ENCODE measurements at regions of chr11 and their contacts with region 1.

Region 1: GRCh38 chr11:10405855-10406592 is 49.0 kb upstream of the AMPD3 start:
- DNase-seq: peak; percentile 74
- H3K4me3 Mint-ChIP-seq: no peak overlapping the region
- H3K27ac Mint-ChIP-seq: no peak overlapping the region
- H3K4me1 Mint-ChIP-seq: peaks cover 12% of the 10 kb centered on the region
- H3K27me3 Mint-ChIP-seq: peaks cover 4% of the 10 kb centered on the region
- CTCF ChIP-seq: no peak

Region 2: DNA sequence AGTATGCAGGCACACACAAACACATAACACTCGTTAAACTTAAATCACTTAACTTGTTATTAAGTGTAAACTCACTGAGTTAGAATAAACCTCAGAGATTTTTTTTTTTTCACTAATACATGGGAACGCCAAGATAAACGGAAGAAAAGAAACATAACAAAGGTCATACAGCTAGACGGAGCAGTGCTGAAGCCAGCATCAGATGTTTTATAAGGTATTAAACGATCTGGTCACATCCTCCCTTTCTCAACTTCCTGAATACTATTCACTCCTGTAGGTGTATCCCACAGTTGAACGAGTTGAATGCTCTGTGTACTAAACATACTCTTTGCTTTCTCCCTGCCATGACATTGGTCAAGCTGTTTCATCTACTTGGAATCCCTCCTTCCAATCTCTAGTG is 530.2 kb before region 1 on chr11:
- CTCF ChIA-PET with region 1: no interaction called
- intact Hi-C with region 1: no loop called
- DNase-seq: no peak
- H3K4me3 Mint-ChIP-seq: no peak overlapping the region
- H3K27ac Mint-ChIP-seq: no peak overlapping the region
- H3K4me1 Mint-ChIP-seq: no peaks in the 10 kb centered on the region
- H3K27me3 Mint-ChIP-seq: no peaks in the 10 kb centered on the region
- CTCF ChIP-seq: no peak

Region 3: DNA sequence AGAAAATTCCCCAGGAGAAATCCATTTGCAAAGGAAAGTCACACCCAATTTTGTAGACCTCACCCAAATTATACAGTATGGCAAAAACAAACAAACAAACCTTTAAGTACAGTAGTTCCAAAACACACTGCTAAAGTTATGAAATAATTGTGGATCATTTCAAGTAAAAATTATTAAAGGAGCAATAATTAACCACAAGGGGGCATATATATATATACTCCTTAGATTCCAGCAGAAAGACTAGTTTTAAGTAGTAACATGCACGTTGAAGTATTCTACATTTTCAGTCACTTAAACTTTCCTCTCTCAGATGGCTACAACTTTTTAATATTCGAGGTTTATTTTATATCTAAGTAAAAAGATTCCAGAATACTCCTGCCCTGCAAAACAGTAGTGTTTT is 108.2 kb after region 1 on chr11:
- CTCF ChIA-PET with region 1: no interaction called
- intact Hi-C with region 1: loop called (anchors 2 kb)
- DNase-seq: no peak
- H3K4me3 Mint-ChIP-seq: no peak overlapping the region
- H3K27ac Mint-ChIP-seq: no peak overlapping the region
- H3K4me1 Mint-ChIP-seq: no peaks in the 10 kb centered on the region
- H3K27me3 Mint-ChIP-seq: no peaks in the 10 kb centered on the region
- CTCF ChIP-seq: peak; percentile 19

Region 4: GRCh38 chr11:10592331-10592730 is 186.3 kb after region 1 on chr11:
- CTCF ChIA-PET with region 1: no interaction called
- intact Hi-C with region 1: no loop called
- DNase-seq: no peak
- H3K4me3 Mint-ChIP-seq: no peak overlapping the region
- H3K27ac Mint-ChIP-seq: peak overlapping the region; percentile 87
- H3K4me1 Mint-ChIP-seq: peaks cover 40% of the 10 kb centered on the region
- H3K27me3 Mint-ChIP-seq: no peaks in the 10 kb centered on the region
- CTCF ChIP-seq: no peak

Region 5: GRCh38 chr11:10653926-10654810 is 248.1 kb after region 1 on chr11:
- CTCF ChIA-PET with region 1: interaction called, 6 read pairs
- intact Hi-C with region 1: loop called (anchors 1 kb)
- DNase-seq: peak; percentile 48
- H3K4me3 Mint-ChIP-seq: no peak overlapping the region
- H3K27ac Mint-ChIP-seq: no peak overlapping the region
- H3K4me1 Mint-ChIP-seq: peaks cover 31% of the 10 kb centered on the region
- H3K27me3 Mint-ChIP-seq: no peaks in the 10 kb centered on the region
- CTCF ChIP-seq: peak; percentile 40